Testis (tissue), 5 donors: ENCODE measurements at regions of chr2 and their contacts with region 1.

Region 1: DNA sequence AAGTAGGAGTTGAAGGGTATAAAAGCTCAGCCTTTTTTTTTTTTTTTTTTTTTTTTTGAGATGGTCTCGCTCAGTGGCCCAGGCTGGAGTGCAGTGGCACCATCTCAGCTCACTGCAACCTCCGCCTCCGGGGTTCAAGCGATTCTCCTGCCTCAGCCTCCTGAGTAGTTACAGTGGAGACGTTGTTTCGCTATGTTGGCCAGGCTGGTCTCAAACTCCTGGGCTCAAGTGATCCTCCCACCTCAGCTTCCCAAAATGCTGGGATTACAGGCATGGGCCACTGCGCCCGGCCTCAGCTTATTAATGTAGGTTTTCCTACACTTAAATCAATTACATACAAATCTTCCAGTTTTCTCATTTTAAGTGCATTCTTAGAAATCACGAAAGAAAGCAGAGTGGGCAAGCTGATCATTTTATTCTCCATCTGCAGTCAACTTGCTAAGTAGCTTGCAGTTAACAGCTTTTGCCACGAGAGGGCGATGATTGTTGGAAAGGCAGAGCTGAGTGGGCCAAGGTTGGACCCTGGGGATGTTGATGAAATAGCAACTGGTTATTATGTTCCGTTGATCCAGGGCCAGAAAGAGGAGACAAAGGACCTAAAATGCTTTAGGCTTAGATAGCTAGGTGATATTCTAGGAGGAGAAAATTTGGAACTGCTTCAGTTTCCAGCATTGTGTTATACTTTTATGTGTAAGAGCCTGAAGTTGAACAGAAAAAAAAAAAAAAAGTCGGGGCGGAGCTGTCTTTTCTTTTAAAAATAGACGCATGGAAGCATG is 234.4 kb upstream of the EPAS1 start:
- DNase-seq: peak; percentile 94
- H3K4me3 ChIP-seq: no peak overlapping the region
- H3K27ac ChIP-seq: no peak overlapping the region
- H3K4me1 ChIP-seq: peaks cover 12% of the 10 kb centered on the region
- H3K27me3 ChIP-seq: no peaks in the 10 kb centered on the region
- CTCF ChIP-seq: peak; percentile 89 to 94 (median 89)
- POLR2A ChIP-seq: no peak

Region 2: GRCh38 chr2:46296840-46297545 is 234.2 kb after region 1 on chr2 and contains the start of gene EPAS1:
- intact Hi-C with region 1: no loop called
- DNase-seq: peak; percentile 94
- H3K4me3 ChIP-seq: peak within 1 kb of the TSS; percentile 78 to 90
- H3K27ac ChIP-seq: peak within 1 kb of the TSS; percentile 91 to 92
- H3K4me1 ChIP-seq: peaks cover 11% of the 10 kb centered on the region
- H3K27me3 ChIP-seq: no peaks in the 10 kb centered on the region
- CTCF ChIP-seq: no peak
- POLR2A ChIP-seq: peak; percentile 26
- total RNA-seq, gene EPAS1: 142 to 158 TPM

Region 3: GRCh38 chr2:46364797-46365457 is 302.1 kb after region 1 on chr2:
- intact Hi-C with region 1: loop called (anchors 5 kb)
- DNase-seq: peak; percentile 66
- H3K4me3 ChIP-seq: no peak overlapping the region
- H3K27ac ChIP-seq: no peak overlapping the region
- H3K4me1 ChIP-seq: peaks cover 4% of the 10 kb centered on the region
- H3K27me3 ChIP-seq: no peaks in the 10 kb centered on the region
- CTCF ChIP-seq: peak; percentile 69 to 79 (median 73)
- POLR2A ChIP-seq: no peak

Region 4: GRCh38 chr2:46749042-46749531 is 686.3 kb after region 1 on chr2:
- intact Hi-C with region 1: no loop called
- DNase-seq: no peak
- H3K4me3 ChIP-seq: no peak overlapping the region
- H3K27ac ChIP-seq: no peak overlapping the region
- H3K4me1 ChIP-seq: peaks cover 17% of the 10 kb centered on the region
- H3K27me3 ChIP-seq: no peaks in the 10 kb centered on the region
- CTCF ChIP-seq: no peak
- POLR2A ChIP-seq: no peak